ENCODE measurements at regions of chr22 and their contacts with region 1.

Region 1: DNA sequence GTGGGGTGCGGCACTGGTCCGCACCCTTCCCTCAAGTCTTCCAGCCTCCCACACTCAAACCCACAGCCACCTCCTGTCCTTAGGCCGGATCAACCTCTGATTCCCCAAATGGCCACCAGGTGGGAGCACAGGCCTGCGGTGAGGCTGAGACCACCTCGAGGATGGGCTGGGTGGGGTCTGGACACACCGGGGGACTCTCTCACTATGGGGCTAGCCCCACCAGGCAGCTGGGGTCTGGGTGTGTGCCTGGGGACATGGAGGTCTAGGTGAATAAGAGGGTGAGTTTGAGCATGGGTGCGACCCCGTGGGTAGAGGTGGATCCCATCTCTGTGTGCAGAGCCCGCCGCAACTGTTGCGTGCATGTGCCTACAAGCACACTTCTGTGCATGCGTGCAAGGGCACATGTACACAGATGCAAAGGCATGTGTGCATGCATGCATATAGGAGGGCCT is 32.6 kb downstream of the MYO18B start:
- DNase-seq: no peak
- ATAC-seq: no peak
- H3K4me3 Mint-ChIP-seq: no peak overlapping the region
- H3K27ac Mint-ChIP-seq: no peak overlapping the region
- H3K4me1 Mint-ChIP-seq: peaks cover 19% of the 10 kb centered on the region
- H3K27me3 Mint-ChIP-seq: no peaks in the 10 kb centered on the region

Region 2: GRCh38 chr22:25447686-25448434 is 326.7 kb before region 1 on chr22:
- CTCF ChIA-PET with region 1: interaction called, 11 read pairs
- DNase-seq: peak; percentile 94
- ATAC-seq: peak; percentile 92
- H3K4me3 Mint-ChIP-seq: peak overlapping the region; percentile 83
- H3K27ac Mint-ChIP-seq: peak overlapping the region; percentile 89
- H3K4me1 Mint-ChIP-seq: peaks cover 44% of the 10 kb centered on the region
- H3K27me3 Mint-ChIP-seq: no peaks in the 10 kb centered on the region

Region 3: GRCh38 chr22:25546751-25547150 is 227.8 kb before region 1 on chr22:
- CTCF ChIA-PET with region 1: interaction called, 35 read pairs
- DNase-seq: no peak
- ATAC-seq: no peak
- H3K4me3 Mint-ChIP-seq: no peak overlapping the region
- H3K27ac Mint-ChIP-seq: no peak overlapping the region
- H3K4me1 Mint-ChIP-seq: peaks cover 53% of the 10 kb centered on the region
- H3K27me3 Mint-ChIP-seq: no peaks in the 10 kb centered on the region

Region 4: GRCh38 chr22:25644122-25644521 is 130.5 kb before region 1 on chr22:
- CTCF ChIA-PET with region 1: no interaction called
- DNase-seq: no peak
- ATAC-seq: no peak
- H3K4me3 Mint-ChIP-seq: no peak overlapping the region
- H3K27ac Mint-ChIP-seq: no peak overlapping the region
- H3K4me1 Mint-ChIP-seq: peaks cover 14% of the 10 kb centered on the region
- H3K27me3 Mint-ChIP-seq: no peaks in the 10 kb centered on the region

Region 5: GRCh38 chr22:25702040-25702439 is 72.6 kb before region 1 on chr22:
- CTCF ChIA-PET with region 1: interaction called, 23 read pairs
- DNase-seq: no peak
- ATAC-seq: no peak
- H3K4me3 Mint-ChIP-seq: peak overlapping the region; percentile 44
- H3K27ac Mint-ChIP-seq: peak overlapping the region; percentile 70
- H3K4me1 Mint-ChIP-seq: peaks cover 44% of the 10 kb centered on the region
- H3K27me3 Mint-ChIP-seq: no peaks in the 10 kb centered on the region

Region 6: GRCh38 chr22:25736378-25737011 is 38.1 kb before region 1 on chr22:
- CTCF ChIA-PET with region 1: interaction called, 10 read pairs
- DNase-seq: peak; percentile 92
- ATAC-seq: peak; percentile 88
- H3K4me3 Mint-ChIP-seq: peak overlapping the region; percentile 57
- H3K27ac Mint-ChIP-seq: peak overlapping the region; percentile 98
- H3K4me1 Mint-ChIP-seq: peaks cover 62% of the 10 kb centered on the region
- H3K27me3 Mint-ChIP-seq: no peaks in the 10 kb centered on the region

Measured in activated CD8-positive, alpha-beta memory T cell treated with anti-CD3 and anti-CD28 coated beads, Interleukin-2, amount 10 ng/mL, durations not matched to agents 7 days and 5 days (primary cell).